ENCODE measurements at regions of chr17 and their contacts with region 1.

Region 1: DNA sequence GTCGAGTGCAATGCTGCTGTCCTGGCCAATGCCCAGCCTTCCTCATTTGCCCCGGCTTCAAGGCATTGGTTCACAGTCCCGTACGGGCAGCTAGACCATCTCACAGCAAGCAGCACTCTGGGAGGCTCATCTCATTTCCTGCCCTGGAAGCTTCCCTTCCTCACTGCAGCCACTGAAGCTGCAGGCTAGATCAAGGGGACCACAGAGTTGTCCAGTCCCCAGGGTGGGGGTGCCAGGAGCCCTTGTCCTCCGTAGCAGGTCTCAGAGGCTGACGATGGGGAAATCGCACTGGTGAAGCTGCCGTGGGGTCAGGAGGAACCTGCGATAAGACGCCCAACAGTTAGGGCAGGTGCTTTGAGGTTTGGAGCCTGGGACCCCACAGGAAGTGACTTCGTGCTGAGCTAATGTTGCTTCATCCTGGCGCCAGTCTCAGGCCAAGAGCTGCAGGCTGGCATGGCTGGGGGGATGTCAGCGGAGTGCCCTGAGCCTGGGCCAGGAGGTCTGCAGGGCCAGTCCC is at the start of gene SPNS3:
- DNase-seq: no peak
- H3K4me3 ChIP-seq: no peak within 1 kb of the TSS
- H3K27ac ChIP-seq: no peak within 1 kb of the TSS
- H3K4me1 ChIP-seq: no peaks in the 10 kb centered on the region
- H3K27me3 ChIP-seq: no peaks in the 10 kb centered on the region
- CTCF ChIP-seq: no peak
- POLR2A ChIP-seq: no peak
- total RNA-seq, gene SPNS3: not detected

Region 2: DNA sequence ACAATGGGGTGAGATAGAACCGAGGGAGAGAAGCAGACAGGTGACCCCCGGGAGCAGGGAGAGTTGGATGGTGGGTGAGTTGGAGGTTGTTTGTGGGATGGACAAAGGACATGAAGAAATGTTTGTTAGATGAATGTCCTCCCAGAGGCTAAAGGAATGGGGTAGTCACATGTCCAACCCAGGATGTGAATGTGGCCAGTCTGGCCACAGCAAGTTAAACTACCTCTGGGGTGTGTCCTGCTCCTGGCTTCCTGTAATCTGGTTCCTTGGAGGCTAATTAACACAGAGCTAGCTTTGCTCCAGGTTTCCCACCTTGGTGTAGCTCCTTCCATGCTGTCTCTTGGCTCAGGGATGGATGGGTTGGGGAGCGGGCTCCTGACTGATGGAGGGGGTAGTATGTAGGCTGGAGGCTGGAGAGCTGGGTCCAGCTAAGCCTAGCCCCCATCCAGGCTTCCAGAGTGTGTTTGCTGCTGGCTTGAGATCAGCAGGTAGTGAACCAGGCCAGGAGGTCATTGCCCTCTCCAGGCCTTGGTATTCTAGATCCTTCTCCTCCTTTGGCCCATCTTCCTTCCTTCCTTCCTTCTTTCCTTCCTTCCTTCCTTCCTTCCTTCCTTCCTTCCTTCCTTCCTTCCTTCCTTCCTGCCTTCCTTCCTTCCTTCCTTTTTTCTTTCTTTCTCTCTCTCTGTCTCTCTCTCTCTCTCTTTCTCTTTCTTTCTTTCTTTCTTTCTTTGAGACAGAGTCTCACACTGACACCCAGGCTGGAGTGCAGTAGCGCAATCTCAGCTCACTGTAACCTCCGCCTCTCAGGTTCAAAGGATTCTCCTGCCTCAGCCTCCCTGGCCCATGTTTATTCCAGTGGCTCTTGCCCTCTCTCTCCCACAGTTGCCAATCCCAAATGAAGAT is 39.1 kb before region 1 on chr17:
- intact Hi-C with region 1: no loop called
- DNase-seq: no peak
- H3K4me3 ChIP-seq: no peak overlapping the region
- H3K27ac ChIP-seq: no peak overlapping the region
- H3K4me1 ChIP-seq: peaks cover 20% of the 10 kb centered on the region
- H3K27me3 ChIP-seq: no peaks in the 10 kb centered on the region
- CTCF ChIP-seq: no peak
- POLR2A ChIP-seq: no peak

Region 3: DNA sequence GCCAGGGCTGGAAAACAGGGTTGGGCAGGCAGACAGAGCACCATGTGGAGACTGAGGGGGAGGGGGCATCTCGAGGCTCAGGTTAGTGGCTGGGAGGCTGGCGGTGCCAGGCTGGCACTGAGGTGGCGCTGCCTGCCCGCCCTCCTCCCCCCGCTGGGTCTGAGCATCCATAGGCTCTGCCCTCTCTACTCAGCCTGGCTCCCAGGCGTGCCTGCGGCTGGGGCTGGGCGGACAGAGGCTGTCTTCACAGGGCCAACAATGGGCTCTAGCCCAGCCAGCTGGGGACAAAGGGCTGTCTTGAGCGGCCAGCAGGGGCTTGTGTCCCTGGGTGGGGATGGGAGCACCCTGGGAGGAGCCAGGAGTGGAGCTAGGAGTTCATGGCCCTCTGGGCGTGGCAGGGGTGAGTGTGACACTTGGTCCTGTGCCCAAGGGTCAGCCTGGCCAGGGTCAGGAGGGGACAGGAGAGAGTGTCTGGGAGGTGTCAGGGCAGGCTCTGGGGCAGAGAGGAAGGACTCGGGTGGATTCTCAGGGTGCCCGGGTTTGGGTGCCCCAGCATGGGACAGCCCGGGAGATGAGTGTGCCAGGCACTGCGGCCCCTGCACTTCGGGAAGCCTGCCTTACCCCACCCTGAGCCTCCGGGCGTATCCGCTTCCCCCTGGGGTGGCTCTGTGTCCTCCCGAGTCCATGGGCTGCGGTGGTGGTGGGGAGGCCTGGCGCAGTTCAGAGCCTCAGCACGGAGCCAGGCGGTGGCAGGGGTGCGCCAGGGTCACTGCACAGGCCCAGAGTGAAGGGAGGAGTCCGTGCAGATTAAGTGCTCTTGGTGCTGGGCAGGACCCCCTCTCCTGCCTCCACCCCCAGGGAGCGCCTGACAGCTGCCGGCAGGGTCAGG is 100.7 kb after region 1 on chr17:
- intact Hi-C with region 1: loop called (anchors 10 kb)
- DNase-seq: no peak
- H3K4me3 ChIP-seq: no peak overlapping the region
- H3K27ac ChIP-seq: no peak overlapping the region
- H3K4me1 ChIP-seq: peaks cover 52% of the 10 kb centered on the region
- H3K27me3 ChIP-seq: no peaks in the 10 kb centered on the region
- CTCF ChIP-seq: no peak
- POLR2A ChIP-seq: no peak